Left colon (tissue), 2 donors: ENCODE measurements at regions of chr6 and their contacts with region 1.

Region 1: GRCh38 chr6:145887969-145888368 is 73.4 kb upstream of the FBXO30 start:
- DNase-seq: peak in 1 of 2 donors; percentile 19
- ATAC-seq: peak; percentile 58

Region 2: GRCh38 chr6:144931172-144932035 is 956.6 kb before region 1 on chr6:
- intact Hi-C with region 1: no loop called
- DNase-seq: peak in 1 of 2 donors; percentile 37
- ATAC-seq: peak; percentile 58

Region 3: GRCh38 chr6:145734486-145735355 is 153.2 kb before region 1 on chr6:
- intact Hi-C with region 1: loop called in 1 of 2 experiments (anchors 10 kb)
- DNase-seq: peak; percentile 91 to 92
- ATAC-seq: peak; percentile 88

Region 4: DNA sequence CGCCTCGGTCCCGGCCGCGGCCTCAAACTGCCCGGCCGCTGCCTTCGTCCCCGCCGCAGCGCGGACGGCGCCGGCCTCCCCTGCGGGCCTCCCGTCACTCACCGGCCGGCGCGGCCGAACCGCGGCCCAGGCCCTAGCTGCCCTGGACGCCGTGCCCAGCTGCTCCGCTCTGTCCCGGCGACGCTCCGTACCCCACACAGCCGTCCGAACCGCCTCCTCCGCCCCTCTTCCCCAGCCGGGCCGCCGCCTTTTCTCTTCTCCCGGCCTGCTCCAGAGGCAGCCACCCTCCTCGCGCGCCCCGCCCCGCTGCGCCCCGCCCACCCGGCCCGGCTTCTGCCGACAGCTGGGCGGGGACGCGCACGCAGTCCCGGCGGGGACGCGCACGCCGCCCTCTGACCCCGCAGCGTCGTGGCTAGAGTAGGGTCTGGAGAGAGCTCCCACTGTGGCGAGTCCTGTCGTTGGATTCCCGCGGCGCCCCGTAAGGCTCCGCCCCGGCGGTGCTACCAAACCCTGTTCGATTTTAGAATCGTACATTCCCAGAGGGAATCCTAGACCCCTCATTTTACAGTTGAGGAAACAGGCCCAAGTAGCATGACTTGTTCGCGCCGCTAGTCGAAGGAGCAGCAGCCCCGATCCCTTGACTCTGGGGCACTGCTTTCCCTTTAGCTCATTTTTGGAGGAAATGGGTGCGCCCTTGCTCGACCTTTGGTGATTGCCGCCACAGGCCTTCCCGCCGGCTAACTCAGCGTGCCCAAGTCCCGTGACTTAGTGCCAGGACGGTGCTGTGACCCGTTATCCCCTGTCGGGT is 73.3 kb before region 1 on chr6 and contains the start of gene FBXO30:
- intact Hi-C with region 1: loop called in 1 of 2 experiments (anchors 5 kb)
- DNase-seq: peak; percentile 79 to 88
- ATAC-seq: peak; percentile 97
- total RNA-seq, gene FBXO30: 5.5 to 9.4 TPM

Region 5: DNA sequence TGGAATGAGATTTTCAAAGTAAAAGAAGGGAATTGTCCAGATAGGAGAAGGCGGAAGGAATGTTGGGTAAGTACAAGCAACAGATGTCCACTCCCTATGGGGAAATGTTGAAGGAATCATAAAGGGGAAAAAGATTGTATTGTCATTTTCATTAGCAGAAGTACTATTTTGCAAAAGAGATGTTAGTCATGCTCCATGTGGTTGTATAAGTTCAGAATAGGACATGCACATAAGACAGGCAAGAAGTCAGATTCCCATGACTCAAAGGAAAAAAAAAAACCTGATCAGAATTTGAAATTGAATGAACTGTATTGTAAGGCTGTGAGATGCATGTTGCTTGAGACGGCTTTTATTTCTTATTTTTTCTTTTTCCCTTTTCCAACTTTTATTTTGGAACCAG is 177.7 kb after region 1 on chr6:
- intact Hi-C with region 1: no loop called
- DNase-seq: no peak
- ATAC-seq: no peak